Dorsolateral prefrontal cortex (tissue), 120 donors: ENCODE measurements at regions of chr1 and their contacts with region 1.

Region 1: DNA sequence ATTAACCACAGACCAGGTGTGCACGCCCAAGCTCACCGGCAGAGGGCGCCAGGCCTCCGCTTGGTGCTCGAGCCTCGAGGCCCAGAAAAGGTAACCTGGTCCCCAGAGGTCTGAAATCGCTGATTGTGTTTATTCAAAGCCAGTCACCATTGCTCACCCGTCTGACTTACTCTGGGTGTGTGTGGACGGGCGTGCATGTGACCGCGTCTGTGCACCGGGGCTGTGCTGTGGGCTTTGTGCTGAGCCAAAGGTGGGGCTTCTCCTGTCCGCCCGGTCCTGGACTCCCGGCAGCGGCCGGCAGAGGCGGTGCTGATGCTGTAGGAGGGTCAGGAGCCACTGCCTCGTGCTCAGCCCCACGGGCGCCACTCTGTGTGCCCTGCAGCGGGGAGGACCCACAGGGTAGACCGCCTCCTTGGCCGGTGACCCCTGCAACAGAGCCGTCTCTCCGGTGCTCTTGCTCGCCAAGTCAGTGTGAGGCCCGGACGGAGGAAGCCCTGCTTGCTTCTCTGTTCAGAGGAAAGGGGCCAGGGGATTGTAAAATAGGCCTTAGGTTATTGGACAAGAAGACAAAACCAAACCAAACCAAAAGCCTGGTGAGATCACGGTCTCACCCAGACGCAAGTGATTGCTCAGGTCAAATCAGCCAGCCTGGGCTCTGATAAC is 32.0 kb upstream of the BTG2 start:
- DNase-seq: peak; percentile 84 to 93 (median 90)
- H3K4me3 ChIP-seq: peak overlapping the region in 58 of 59 donors; percentile 5 to 61 (median 41)
- H3K27ac ChIP-seq: peak overlapping the region; percentile 71 to 99 (median 98)
- H3K27me3 ChIP-seq: no peaks in the 10 kb centered on the region
- CTCF ChIP-seq: peak; percentile 95 to 100 (median 99)

Region 2: DNA sequence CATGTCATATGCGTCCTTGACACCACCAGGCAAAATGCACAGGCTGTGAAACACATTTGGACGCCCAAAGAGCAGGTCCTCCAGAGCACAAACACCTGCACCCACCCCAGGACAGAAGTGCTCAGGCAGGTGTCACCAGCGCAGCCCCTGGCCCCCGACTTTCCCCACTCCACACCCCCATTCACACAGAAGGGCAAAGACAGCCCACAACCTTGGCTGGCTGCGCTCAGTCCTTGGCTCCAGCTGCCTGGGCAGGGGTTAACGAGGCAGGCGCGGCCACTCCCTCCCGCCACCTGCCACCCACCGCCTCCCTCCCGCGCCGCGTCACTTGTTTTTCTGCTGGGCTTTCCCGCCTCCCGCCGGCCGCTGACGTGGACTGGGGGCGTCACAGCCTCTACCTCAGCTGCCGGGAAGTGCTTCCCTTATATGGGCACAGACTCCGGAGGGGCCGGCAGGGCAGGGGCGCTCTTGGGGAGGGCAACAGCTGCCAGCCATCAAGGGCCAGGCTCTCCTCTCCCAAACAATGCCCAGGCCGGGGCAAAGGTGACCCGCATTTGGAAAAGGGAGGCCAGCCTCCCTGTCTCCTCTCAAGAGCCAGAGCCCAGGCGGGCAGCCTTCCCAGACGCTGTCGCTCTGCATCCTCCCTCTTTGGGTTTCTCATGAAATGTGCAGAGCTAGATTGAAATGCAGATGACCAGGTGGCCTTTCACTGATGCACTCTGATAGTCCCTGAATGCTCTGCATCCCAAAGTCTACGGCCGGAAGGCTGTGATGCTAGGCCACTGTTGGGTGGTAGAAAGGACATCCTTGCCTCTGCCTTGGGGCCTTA is 17.1 kb after region 1 on chr1:
- intact Hi-C with region 1: loop called in 1 of 2 experiments (anchors 2 kb)
- DNase-seq: peak; percentile 92 to 99 (median 95)
- H3K4me3 ChIP-seq: peak overlapping the region in 58 of 59 donors; percentile 3 to 61 (median 47)
- H3K27ac ChIP-seq: peak overlapping the region; percentile 87 to 100 (median 98)
- H3K27me3 ChIP-seq: no peaks in the 10 kb centered on the region
- CTCF ChIP-seq: peak in 16 of 56 donors; percentile 4 to 40 (median 14)

Region 3: GRCh38 chr1:203326830-203327683 is 53.7 kb after region 1 on chr1:
- intact Hi-C with region 1: loop called (anchors 1 kb)
- DNase-seq: peak; percentile 87 to 96 (median 92)
- H3K4me3 ChIP-seq: peak overlapping the region; percentile 39 to 92 (median 66)
- H3K27ac ChIP-seq: peak overlapping the region; percentile 82 to 100 (median 95)
- H3K27me3 ChIP-seq: no peaks in the 10 kb centered on the region
- CTCF ChIP-seq: peak in 1 of 56 donors; percentile 1

Region 4: DNA sequence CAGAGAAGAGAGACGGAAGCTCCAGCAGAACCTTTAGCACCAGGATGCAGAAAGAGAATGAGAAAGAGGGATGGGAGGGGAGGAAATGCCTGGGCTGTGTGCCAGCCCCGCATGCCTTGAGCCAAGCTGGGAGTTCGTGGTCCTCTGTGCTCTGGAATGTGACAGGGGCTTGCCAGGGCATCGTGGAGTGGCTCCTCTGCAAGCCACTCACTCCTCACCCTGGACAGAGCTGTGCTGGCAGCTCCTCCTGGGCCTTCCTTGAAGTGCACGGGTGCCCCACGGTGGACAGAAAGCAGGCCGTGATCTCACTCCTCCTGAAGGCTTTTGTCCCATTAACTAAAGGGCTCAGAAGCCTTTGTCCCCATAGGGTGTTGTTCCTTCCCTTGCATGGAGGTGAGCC is 167.4 kb after region 1 on chr1:
- intact Hi-C with region 1: loop called in 1 of 2 experiments (anchors 5 kb)
- DNase-seq: peak; percentile 64 to 83 (median 76)
- H3K4me3 ChIP-seq: no peak overlapping the region
- H3K27ac ChIP-seq: peak overlapping the region in 40 of 59 donors; percentile 1 to 78 (median 44)
- H3K27me3 ChIP-seq: no peaks in the 10 kb centered on the region
- CTCF ChIP-seq: peak in 55 of 56 donors; percentile 17 to 84 (median 68)

Region 5: GRCh38 chr1:203486618-203487370 is 213.5 kb after region 1 on chr1:
- intact Hi-C with region 1: loop called (anchors 2 to 5 kb)
- DNase-seq: no peak
- H3K4me3 ChIP-seq: peak overlapping the region in 34 of 59 donors; percentile 31 to 68 (median 55)
- H3K27ac ChIP-seq: peak overlapping the region in 54 of 59 donors; percentile 10 to 88 (median 68)
- H3K27me3 ChIP-seq: no peaks in the 10 kb centered on the region
- CTCF ChIP-seq: no peak

Region 6: GRCh38 chr1:203619091-203619780 is 345.9 kb after region 1 on chr1:
- intact Hi-C with region 1: no loop called
- DNase-seq: no peak
- H3K4me3 ChIP-seq: no peak overlapping the region
- H3K27ac ChIP-seq: no peak overlapping the region
- H3K27me3 ChIP-seq: no peaks in the 10 kb centered on the region
- CTCF ChIP-seq: no peak